Activated T-helper 1 cell treated with anti-CD3 and anti-CD28 coated beads, Interleukin-12 subunit alpha, Interleukin-12 subunit beta, Interleukin-2, Interleukin-4 antibody, amounts not matched to agents 30 ng/mL and 10 ng/mL and 1 ng/mL, durations not matched to agents 14 hours and 24 hours and 36 hours (primary cell): ENCODE measurements at regions of chr10 and their contacts with region 1.

Region 1: DNA sequence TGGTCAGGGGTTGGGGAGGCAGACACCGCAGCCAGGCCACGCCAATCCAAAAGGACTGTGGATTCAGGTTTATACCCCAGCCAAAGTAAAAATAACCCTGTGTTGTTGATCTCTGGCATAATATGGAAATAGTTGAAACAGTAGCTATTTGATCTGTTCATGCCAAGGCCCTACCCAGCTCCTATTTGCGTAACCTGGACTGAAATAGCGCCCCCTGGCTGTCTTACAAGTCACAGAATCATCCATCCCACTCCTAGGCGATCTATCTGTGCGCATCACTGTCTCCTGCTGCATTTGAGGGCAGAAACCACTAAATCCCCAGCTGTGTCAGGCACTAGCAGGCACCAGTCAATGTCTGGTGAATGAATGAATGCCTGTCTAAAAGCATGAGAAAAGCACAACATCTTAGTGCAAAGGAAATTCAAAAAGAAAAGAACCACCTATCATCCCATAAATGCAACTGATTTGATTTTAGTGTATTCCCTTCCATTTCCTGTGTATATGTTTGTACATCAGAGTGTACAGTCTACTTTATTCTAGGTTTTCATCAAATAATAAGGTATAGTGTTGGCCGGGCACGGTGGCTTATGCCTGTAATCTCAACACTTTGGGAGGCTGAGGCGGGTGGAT is 160.0 kb downstream of the SLIT1 start:
- DNase-seq: peak; percentile 41
- H3K4me3 Mint-ChIP-seq: no peak overlapping the region
- H3K27ac Mint-ChIP-seq: no peak overlapping the region
- H3K4me1 Mint-ChIP-seq: peaks cover 10% of the 10 kb centered on the region
- H3K27me3 Mint-ChIP-seq: peaks cover 17% of the 10 kb centered on the region

Region 2: GRCh38 chr10:96225119-96225518 is 800.6 kb before region 1 on chr10:
- intact Hi-C with region 1: no loop called
- DNase-seq: no peak
- H3K4me3 Mint-ChIP-seq: no peak overlapping the region
- H3K27ac Mint-ChIP-seq: no peak overlapping the region
- H3K4me1 Mint-ChIP-seq: no peaks in the 10 kb centered on the region
- H3K27me3 Mint-ChIP-seq: peaks cover 8% of the 10 kb centered on the region

Region 3: GRCh38 chr10:96395931-96396877 is 629.5 kb before region 1 on chr10:
- intact Hi-C with region 1: loop called (anchors 1 kb)
- DNase-seq: peak; percentile 21
- H3K4me3 Mint-ChIP-seq: no peak overlapping the region
- H3K27ac Mint-ChIP-seq: no peak overlapping the region
- H3K4me1 Mint-ChIP-seq: no peaks in the 10 kb centered on the region
- H3K27me3 Mint-ChIP-seq: peaks cover 37% of the 10 kb centered on the region

Region 4: DNA sequence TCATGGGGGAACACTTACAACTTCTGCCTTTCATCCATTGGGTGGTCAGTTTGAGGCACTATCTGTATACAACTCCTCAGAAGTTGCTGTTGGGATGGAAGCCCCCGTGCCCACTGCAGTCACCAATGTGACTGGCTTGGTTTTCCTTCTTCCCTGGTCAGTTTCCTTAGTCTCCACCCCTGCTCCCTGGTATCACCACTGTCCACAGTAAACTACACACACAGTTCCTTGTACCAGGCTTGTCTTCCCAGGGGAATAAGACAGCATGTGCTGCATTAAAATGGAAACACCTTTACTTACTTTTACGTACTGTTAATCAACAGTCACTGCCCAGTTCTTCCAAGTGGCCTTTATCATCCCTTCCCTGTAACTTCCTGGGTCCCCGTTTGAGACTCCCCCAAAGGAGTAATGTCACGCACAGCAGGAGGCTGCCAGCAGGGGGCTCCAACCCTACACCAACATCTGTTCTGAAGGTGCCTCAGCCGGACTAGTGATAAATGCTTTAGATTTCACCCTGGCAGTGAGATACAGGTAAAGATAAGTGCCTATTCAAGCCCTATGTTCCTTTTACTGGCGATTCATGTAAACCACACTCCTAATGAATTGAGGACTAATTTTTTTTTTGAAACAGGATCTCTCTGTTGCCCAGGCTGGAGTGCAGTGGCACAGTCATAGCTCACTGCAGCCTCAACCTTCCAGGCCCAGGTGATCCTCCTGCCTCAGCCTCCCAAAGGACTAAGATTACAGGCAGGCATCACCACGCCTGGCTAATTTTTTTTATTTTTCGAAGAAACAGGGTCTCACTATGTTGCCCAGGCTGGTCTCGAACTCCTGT is 260.1 kb before region 1 on chr10:
- intact Hi-C with region 1: loop called (anchors 1 kb)
- DNase-seq: peak; percentile 42
- H3K4me3 Mint-ChIP-seq: no peak overlapping the region
- H3K27ac Mint-ChIP-seq: no peak overlapping the region
- H3K4me1 Mint-ChIP-seq: peaks cover 6% of the 10 kb centered on the region
- H3K27me3 Mint-ChIP-seq: peaks cover 7% of the 10 kb centered on the region

Region 5: GRCh38 chr10:96789571-96790108 is 236.1 kb before region 1 on chr10:
- intact Hi-C with region 1: loop called (anchors 1 kb)
- DNase-seq: peak; percentile 33
- H3K4me3 Mint-ChIP-seq: no peak overlapping the region
- H3K27ac Mint-ChIP-seq: no peak overlapping the region
- H3K4me1 Mint-ChIP-seq: no peaks in the 10 kb centered on the region
- H3K27me3 Mint-ChIP-seq: peaks cover 12% of the 10 kb centered on the region

Region 6: GRCh38 chr10:96910488-96911395 is 115.0 kb before region 1 on chr10:
- intact Hi-C with region 1: loop called (anchors 1 kb)
- DNase-seq: no peak
- H3K4me3 Mint-ChIP-seq: no peak overlapping the region
- H3K27ac Mint-ChIP-seq: no peak overlapping the region
- H3K4me1 Mint-ChIP-seq: peaks cover 21% of the 10 kb centered on the region
- H3K27me3 Mint-ChIP-seq: no peaks in the 10 kb centered on the region